Left ventricle myocardium inferior (tissue), 1 donor: ENCODE measurements at regions of chr4 and their contacts with region 1.

Region 1: DNA sequence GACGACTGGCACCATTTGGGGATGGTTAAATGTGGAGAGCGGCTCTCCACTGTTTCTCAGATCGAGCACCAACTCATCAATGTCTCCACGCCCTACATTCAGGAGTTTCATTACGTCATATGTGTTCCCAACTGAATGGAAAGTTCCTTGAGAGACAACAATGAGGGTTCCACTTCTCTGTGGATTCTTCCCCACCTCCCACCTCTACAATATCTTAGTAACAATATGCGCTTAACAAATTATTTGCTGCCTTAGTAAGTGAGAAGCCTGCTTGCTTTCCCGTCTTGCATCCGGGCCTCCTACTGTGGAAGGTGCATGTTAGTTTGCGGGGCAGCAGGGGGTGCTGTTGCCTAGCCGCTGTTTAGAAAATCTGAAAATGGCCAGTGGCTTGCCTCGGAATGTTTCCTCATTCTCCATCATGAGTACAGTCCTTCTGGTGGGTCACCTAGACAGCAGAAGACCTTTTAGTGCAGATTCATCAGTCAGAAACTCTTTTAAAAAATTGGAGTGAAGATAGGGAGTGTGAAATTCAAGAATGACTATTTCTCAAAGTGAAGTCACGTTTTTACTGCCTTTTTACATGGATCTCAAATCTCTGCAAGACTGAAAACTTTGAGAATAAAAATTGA is 55.7 kb downstream of the PHOX2B start:
- DNase-seq: peak; percentile 19
- H3K4me3 ChIP-seq: no peak overlapping the region
- H3K27ac ChIP-seq: no peak overlapping the region
- H3K4me1 ChIP-seq: no peaks in the 10 kb centered on the region
- H3K27me3 ChIP-seq: no peaks in the 10 kb centered on the region
- CTCF ChIP-seq: peak; percentile 80

Region 2: GRCh38 chr4:41661442-41662076 is 31.3 kb before region 1 on chr4:
- intact Hi-C with region 1: no loop called
- DNase-seq: peak; percentile 56
- H3K4me3 ChIP-seq: no peak overlapping the region
- H3K27ac ChIP-seq: no peak overlapping the region
- H3K4me1 ChIP-seq: peaks cover 16% of the 10 kb centered on the region
- H3K27me3 ChIP-seq: no peaks in the 10 kb centered on the region
- CTCF ChIP-seq: peak; percentile 98

Region 3: GRCh38 chr4:41791557-41791956 is 98.7 kb after region 1 on chr4:
- intact Hi-C with region 1: no loop called
- DNase-seq: no peak
- H3K4me3 ChIP-seq: no peak overlapping the region
- H3K27ac ChIP-seq: no peak overlapping the region
- H3K4me1 ChIP-seq: peaks cover 10% of the 10 kb centered on the region
- H3K27me3 ChIP-seq: peaks cover 63% of the 10 kb centered on the region
- CTCF ChIP-seq: no peak

Region 4: GRCh38 chr4:41887821-41888686 is 195.2 kb after region 1 on chr4:
- intact Hi-C with region 1: loop called (anchors 5 kb)
- DNase-seq: no peak
- H3K4me3 ChIP-seq: no peak overlapping the region
- H3K27ac ChIP-seq: no peak overlapping the region
- H3K4me1 ChIP-seq: no peaks in the 10 kb centered on the region
- H3K27me3 ChIP-seq: peaks cover 79% of the 10 kb centered on the region
- CTCF ChIP-seq: peak; percentile 94

Region 5: GRCh38 chr4:41977709-41978108 is 284.9 kb after region 1 on chr4:
- intact Hi-C with region 1: no loop called
- DNase-seq: no peak
- H3K4me3 ChIP-seq: no peak overlapping the region
- H3K27ac ChIP-seq: no peak overlapping the region
- H3K4me1 ChIP-seq: peaks cover 7% of the 10 kb centered on the region
- H3K27me3 ChIP-seq: no peaks in the 10 kb centered on the region
- CTCF ChIP-seq: no peak

Region 6: DNA sequence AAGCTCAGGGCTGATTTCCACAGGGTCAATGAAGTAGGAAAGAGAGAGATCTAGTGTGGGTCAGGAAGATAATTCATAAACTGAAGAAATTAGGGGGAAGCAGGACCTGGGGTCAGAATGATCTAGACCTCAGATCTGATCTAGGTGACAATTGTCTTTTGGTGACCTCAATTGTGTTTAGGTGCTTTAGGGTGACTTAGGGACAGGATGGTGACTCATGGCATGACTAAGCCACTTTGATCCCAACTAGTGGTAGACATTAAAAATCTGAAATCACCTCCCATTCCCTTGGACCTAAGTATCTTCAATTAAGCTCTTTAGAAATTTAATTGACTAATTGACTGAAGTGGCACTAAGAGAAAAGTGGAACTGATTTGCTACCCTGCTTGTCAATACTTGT is 1162.9 kb after region 1 on chr4:
- intact Hi-C with region 1: no loop called
- DNase-seq: no peak
- H3K4me3 ChIP-seq: no peak overlapping the region
- H3K27ac ChIP-seq: no peak overlapping the region
- H3K4me1 ChIP-seq: no peaks in the 10 kb centered on the region
- H3K27me3 ChIP-seq: peaks cover 12% of the 10 kb centered on the region
- CTCF ChIP-seq: no peak